ENCODE measurements at regions of chr9 and their contacts with region 1.

Region 1: GRCh38 chr9:16705121-16705604 is 165.3 kb downstream of the BNC2 start:
- DNase-seq: peak; percentile 91 to 99
- ATAC-seq: peak; percentile 94
- H3K4me3 ChIP-seq: peak overlapping the region; percentile 44
- H3K27ac ChIP-seq: peak overlapping the region; percentile 96
- H3K4me1 ChIP-seq: peaks cover 61% of the 10 kb centered on the region
- CTCF ChIP-seq: no peak
- EP300 ChIP-seq: peak; percentile 94 to 99
- POLR2A ChIP-seq: no peak
- RAD21 ChIP-seq: peak; percentile 36 to 66; a peak in 4 of 5 replicates

Region 2: DNA sequence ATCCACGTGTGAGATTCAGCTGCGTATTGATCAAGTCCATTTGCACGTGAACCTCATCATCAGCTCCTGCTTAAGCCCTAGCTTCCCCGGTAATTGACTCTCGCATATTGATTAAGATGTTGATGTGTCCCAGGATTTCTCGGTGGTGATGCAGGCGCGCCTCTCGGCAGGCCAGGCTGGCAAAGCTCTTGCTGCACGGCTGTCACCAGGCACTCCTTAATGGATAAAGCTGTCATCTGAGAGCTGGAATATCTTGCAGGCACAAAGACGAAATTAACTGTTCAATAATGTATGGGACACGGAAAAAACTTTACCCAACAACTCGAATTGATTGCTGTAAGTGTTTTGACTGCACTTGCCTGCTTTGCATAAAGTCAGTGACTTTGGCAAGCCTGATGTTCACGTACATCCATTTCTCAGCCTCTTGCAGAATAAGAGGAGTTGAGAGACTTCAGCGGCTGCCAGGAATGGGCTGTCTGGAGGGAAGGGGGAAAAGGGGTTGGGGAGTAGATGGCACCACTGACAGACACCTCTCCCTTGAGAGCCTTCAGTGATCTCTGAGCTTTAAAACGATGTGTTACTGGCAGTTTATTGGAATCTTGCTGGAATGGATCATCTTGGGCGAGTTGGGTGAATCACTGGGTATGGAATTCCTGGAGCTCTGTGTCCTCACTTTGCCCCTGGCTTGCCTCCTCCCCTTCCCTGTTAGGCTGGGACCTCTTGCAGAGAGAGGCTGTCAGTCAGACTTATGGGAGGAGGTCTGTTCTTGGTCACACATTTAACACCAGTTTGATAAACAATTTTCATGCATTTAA is 502.0 kb before region 1 on chr9:
- CTCF ChIA-PET with region 1: no interaction called
- POLR2A ChIA-PET with region 1: interaction called, 10 read pairs
- DNase-seq: peak; percentile 87 to 90
- ATAC-seq: peak; percentile 99 to 100
- H3K4me3 ChIP-seq: no peak overlapping the region
- H3K27ac ChIP-seq: peak overlapping the region; percentile 88
- H3K4me1 ChIP-seq: peaks cover 40% of the 10 kb centered on the region
- CTCF ChIP-seq: no peak
- EP300 ChIP-seq: peak in 1 of 2 experiments; percentile 81; a peak in 2 of 5 replicates
- POLR2A ChIP-seq: no peak
- RAD21 ChIP-seq: peak; percentile 11 to 39; a peak in 2 of 5 replicates

Region 3: DNA sequence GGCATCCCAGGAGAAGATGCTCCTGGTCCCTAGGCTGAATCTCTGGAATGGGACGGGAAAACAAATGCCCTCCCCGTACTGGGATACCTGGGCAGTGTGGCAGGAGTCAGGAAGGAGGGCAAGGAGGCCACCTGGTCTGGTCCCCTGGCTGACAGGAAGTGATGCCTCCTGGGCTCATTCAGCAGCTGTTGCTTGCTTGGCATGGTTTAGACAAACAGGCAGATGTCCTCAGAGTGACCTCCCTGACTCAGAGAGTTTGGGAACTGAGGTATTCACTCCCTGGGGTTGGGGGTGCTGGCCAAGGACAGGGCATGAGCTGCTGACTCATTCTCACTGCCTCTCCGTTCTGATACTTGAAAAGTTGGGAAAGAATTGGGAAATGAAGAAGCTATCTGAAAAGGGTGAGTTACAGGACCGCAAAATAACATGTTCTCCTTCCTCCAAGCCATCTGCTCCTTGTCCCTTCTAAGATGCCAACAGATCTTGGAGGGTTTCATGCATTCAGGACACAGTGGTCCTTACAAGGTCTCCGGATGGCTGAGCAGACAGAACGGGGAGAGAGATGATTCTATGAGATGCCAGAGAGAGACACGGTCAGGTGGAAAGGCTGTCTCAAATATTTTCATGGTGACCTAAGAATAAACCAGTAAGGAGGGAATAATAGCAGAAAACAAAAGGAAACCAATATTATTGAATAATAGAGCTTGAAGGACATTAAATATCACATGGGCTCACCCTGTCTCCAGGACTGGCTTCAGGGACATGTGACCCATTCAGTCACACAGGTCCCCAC is 369.2 kb before region 1 on chr9:
- CTCF ChIA-PET with region 1: no interaction called
- POLR2A ChIA-PET with region 1: interaction called, 11 read pairs
- DNase-seq: peak; percentile 95 to 97
- ATAC-seq: peak; percentile 88 to 93
- H3K4me3 ChIP-seq: no peak overlapping the region
- H3K27ac ChIP-seq: peak overlapping the region; percentile 96
- H3K4me1 ChIP-seq: peaks cover 38% of the 10 kb centered on the region
- CTCF ChIP-seq: no peak
- EP300 ChIP-seq: peak; percentile 96 to 97
- POLR2A ChIP-seq: no peak
- RAD21 ChIP-seq: peak; percentile 46 to 80

Region 4: DNA sequence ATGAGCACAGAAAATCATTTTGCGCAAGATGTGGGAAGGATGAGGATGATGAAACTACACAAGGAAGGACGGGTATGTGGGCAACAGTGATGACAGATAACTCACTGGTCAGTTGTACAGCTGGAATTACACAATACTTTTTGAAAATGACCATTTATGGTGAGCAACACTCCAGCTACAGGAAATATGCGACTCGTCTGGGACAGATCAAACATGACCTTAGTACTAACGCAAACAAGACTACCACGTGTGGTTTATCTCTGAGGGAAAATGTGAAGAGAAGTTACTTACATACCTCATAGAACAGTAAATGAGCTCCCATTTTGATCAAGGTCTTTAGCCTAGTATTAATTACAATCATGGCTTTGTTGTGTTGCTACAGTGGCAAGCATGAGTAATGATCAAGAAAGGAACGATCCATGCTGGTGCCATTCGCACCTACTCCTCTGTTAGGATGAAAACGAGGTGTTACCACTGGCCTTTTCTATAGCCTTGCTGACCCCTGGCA is 291.6 kb before region 1 on chr9:
- CTCF ChIA-PET with region 1: no interaction called
- POLR2A ChIA-PET with region 1: interaction called, 17 read pairs
- DNase-seq: peak; percentile 57 to 99
- ATAC-seq: peak; percentile 84 to 90
- H3K4me3 ChIP-seq: 0 out of 3 replicates have a peak overlapping the region, but pooled peaks have one; percentile 10
- H3K27ac ChIP-seq: peak overlapping the region; percentile 93 to 94
- H3K4me1 ChIP-seq: peaks cover 92% of the 10 kb centered on the region
- CTCF ChIP-seq: no peak
- EP300 ChIP-seq: peak; percentile 98
- POLR2A ChIP-seq: no peak
- RAD21 ChIP-seq: peak; percentile 41 to 80

Region 5: DNA sequence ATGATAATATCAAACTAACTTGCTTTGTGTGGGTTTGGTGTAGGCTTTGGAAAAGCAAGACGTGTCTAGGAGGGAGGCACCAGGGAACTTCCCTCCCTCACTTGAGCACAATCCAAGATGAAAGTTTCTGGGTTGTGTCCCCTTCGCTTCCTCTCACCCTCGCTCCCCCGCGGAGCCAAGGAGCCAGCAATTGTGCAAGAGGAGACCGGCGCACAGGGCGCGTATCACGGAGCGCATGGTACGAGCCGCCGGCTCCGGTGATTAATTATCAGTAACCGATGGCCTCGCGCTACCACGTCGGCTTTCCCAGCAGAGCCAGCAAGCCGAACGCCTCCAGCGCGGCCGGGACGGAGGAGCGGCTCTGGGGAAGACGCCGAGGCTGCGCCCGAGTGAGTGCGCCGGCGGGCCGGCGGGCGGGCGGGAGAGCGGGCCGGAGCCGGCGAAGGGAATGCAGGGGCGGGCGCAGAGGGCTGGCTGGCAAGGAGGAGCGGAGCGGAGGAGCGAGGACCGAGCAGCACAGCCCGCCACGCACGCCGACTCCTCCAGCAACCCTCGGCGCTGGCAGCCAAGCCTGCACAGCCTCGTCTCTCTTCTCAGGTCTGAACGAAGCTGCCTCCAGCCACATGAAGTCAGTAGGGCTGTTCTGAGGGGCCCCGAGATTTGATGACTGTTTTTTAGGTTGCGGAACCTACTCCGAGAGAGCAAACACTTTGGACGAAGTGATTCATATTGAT is 21.7 kb after region 1 on chr9:
- CTCF ChIA-PET with region 1: interaction called, 4 read pairs
- POLR2A ChIA-PET with region 1: interaction called, 13 read pairs
- DNase-seq: peak; percentile 63 to 84
- ATAC-seq: peak; percentile 89 to 93
- H3K4me3 ChIP-seq: peak overlapping the region; percentile 52
- H3K27ac ChIP-seq: peak overlapping the region; percentile 82 to 90
- H3K4me1 ChIP-seq: peaks cover 50% of the 10 kb centered on the region
- CTCF ChIP-seq: no peak
- EP300 ChIP-seq: peak in 1 of 2 experiments; percentile 34; a peak in 1 of 5 replicates
- POLR2A ChIP-seq: peak; percentile 35
- RAD21 ChIP-seq: no peak; a peak in 1 of 5 replicates